GM12878 (cell line): ENCODE measurements at regions of chr2 and their contacts with region 1.

Region 1: DNA sequence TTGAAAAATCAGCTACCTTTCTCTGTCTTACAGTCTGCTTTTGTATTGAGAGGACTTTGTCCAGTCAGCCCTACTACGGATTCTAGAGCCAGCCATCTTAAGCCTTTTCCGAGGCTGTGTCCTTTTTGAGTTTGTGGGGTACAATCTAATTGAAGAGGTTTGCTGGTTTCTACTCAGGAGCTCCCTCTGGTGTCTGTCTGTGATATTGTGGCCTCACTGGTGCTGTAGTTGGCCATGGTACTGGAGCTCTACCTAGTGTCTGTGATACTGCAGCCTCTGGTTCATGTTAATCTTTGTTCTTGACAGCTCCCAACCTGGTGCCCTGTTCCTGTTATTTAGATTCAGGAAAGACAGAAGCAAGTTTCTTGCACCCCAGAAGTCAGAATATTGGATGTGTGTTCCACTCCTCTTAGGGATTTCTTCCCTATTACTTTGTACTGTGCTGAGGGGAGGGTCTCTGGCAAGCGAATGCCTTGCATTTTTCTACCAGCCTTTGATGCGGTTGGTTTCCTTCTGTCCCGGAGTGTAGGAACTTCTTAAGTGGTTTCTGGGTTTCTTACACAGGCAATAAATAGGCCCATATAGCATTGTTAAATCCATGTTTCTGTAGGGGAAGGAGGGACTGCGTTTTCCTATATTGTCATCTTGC is 78.5 kb downstream of the ACSL3 start:
- DNase-seq: peak; percentile 45
- ATAC-seq: peak; percentile 98
- H3K4me3 ChIP-seq: no peak overlapping the region
- H3K27ac ChIP-seq: no peak overlapping the region
- H3K4me1 ChIP-seq: peaks cover 7% of the 10 kb centered on the region; the same call in 1 of the 2 replicates
- H3K27me3 ChIP-seq: no peaks in the 10 kb centered on the region
- CTCF ChIP-seq: peak; percentile 82 to 85 (median 85)
- EP300 ChIP-seq: no peak
- POLR2A ChIP-seq: no peak
- RAD21 ChIP-seq: peak; percentile 64

Region 2: GRCh38 chr2:222690564-222691200 is 248.7 kb before region 1 on chr2:
- CTCF ChIA-PET with region 1: interaction called, 35 read pairs
- POLR2A ChIA-PET with region 1: no interaction called
- RAD21 ChIA-PET with region 1: interaction called, 7 read pairs
- SMC1A ChIA-PET with region 1: interaction called, 12 read pairs
- in situ Hi-C with region 1: no loop called
- intact Hi-C with region 1: loop called (anchors 1 kb)
- DNase-seq: no peak
- ATAC-seq: peak; percentile 99
- H3K4me3 ChIP-seq: no peak overlapping the region
- H3K27ac ChIP-seq: no peak overlapping the region
- H3K4me1 ChIP-seq: no peaks in the 10 kb centered on the region
- H3K27me3 ChIP-seq: no peaks in the 10 kb centered on the region
- CTCF ChIP-seq: peak; percentile 99 to 100 (median 100); a peak in 5 of 6 replicates
- EP300 ChIP-seq: no peak
- POLR2A ChIP-seq: no peak
- RAD21 ChIP-seq: peak; percentile 93

Region 3: DNA sequence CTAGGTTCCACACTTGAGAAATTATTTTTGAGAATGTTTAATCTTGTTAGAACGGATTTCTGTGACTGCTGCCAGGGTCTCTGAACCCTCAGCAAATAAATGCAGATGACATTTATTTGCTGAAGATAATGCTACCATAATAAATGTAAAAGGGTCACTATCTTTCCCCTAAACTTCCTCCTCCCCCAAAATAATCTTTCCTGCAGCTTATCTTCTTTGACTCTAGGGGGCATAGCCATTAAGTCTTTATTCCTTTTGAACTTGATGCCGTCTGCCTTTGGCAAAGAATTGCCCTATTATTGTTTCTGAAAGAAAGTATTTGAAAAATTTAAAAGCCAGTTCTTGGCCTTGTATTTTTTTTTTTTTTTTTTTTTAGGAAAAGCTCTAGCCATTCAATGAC is 142.1 kb before region 1 on chr2:
- CTCF ChIA-PET with region 1: interaction called, 28 read pairs
- POLR2A ChIA-PET with region 1: no interaction called
- RAD21 ChIA-PET with region 1: interaction called, 6 read pairs
- SMC1A ChIA-PET with region 1: interaction called, 4 read pairs
- in situ Hi-C with region 1: no loop called
- intact Hi-C with region 1: no loop called
- DNase-seq: no peak
- ATAC-seq: peak; percentile 70; the same call in 2 of the 3 replicates
- H3K4me3 ChIP-seq: no peak overlapping the region
- H3K27ac ChIP-seq: no peak overlapping the region
- H3K4me1 ChIP-seq: no peaks in the 10 kb centered on the region
- H3K27me3 ChIP-seq: no peaks in the 10 kb centered on the region
- CTCF ChIP-seq: peak; percentile 38 to 49 (median 49); a peak in 5 of 6 replicates
- EP300 ChIP-seq: no peak
- POLR2A ChIP-seq: no peak
- RAD21 ChIP-seq: peak; percentile 67

Region 4: DNA sequence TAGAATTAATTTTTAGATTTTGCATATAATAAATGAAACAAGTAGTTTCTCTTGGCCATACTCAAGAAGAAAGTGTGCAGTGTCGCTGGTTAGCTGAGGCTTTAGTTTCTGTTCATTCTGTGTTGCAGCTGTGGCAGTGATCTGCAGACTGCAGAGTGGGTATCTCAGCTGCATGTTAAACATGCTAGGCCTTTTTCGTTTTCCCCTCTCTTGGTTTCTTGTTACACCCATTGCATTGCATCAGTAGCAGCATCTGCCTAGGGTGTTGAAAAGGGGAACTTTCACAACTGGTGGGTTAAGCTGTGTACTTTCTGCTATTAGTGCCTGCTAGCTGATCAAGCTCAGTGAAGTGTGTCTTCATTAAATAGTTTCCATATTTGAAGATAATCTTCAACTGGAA is 27.2 kb before region 1 on chr2:
- CTCF ChIA-PET with region 1: interaction called, 41 read pairs
- POLR2A ChIA-PET with region 1: interaction called, 3 read pairs
- RAD21 ChIA-PET with region 1: interaction called, 11 read pairs
- SMC1A ChIA-PET with region 1: interaction called, 18 read pairs
- in situ Hi-C with region 1: no loop called
- intact Hi-C with region 1: loop called (anchors 2 kb)
- DNase-seq: peak; percentile 92
- ATAC-seq: peak; percentile 96
- H3K4me3 ChIP-seq: peak overlapping the region; percentile 44; the same call in 1 of the 2 replicates
- H3K27ac ChIP-seq: peak overlapping the region; percentile 96
- H3K4me1 ChIP-seq: peaks cover 23% of the 10 kb centered on the region
- H3K27me3 ChIP-seq: no peaks in the 10 kb centered on the region
- CTCF ChIP-seq: no peak
- EP300 ChIP-seq: peak; percentile 58 to 88; a peak in 3 of 4 replicates
- POLR2A ChIP-seq: peak; percentile 75
- RAD21 ChIP-seq: no peak

Region 5: DNA sequence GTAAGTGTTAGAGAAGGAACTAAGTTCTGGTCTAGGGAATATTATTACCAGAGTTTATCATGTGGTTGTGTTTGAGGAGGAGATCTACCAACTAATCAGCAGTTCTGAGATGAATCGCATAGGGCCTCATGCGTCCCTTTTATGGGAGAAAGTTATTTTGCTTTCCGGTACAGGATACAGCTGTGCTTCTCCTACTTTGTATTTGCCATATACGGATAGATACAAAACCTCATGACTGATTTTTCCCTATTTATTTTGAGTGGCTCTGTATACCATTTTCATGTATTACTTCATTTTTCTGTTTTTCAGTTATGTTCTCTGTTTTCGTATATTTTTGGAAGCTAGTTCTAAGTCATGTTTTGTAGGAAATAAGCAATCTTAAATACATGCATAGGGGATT is 11.7 kb before region 1 on chr2:
- CTCF ChIA-PET with region 1: interaction called, 25 read pairs
- POLR2A ChIA-PET with region 1: no interaction called
- RAD21 ChIA-PET with region 1: interaction called, 6 read pairs
- SMC1A ChIA-PET with region 1: interaction called, 6 read pairs
- in situ Hi-C with region 1: no loop called
- intact Hi-C with region 1: no loop called
- DNase-seq: no peak
- ATAC-seq: no peak
- H3K4me3 ChIP-seq: no peak overlapping the region
- H3K27ac ChIP-seq: no peak overlapping the region
- H3K4me1 ChIP-seq: no peaks in the 10 kb centered on the region
- H3K27me3 ChIP-seq: no peaks in the 10 kb centered on the region
- CTCF ChIP-seq: no peak
- EP300 ChIP-seq: no peak
- POLR2A ChIP-seq: no peak
- RAD21 ChIP-seq: no peak